Tibial artery (tissue), 4 donors: ENCODE measurements at regions of chr19 and their contacts with region 1.

Region 1: GRCh38 chr19:9004153-9004552 is 6.1 kb downstream of the MUC16 start:
- DNase-seq: no peak
- H3K4me3 ChIP-seq: no peak overlapping the region
- H3K27ac ChIP-seq: no peak overlapping the region
- H3K4me1 ChIP-seq: no peaks in the 10 kb centered on the region
- H3K27me3 ChIP-seq: no peaks in the 10 kb centered on the region
- CTCF ChIP-seq: no peak

Region 2: DNA sequence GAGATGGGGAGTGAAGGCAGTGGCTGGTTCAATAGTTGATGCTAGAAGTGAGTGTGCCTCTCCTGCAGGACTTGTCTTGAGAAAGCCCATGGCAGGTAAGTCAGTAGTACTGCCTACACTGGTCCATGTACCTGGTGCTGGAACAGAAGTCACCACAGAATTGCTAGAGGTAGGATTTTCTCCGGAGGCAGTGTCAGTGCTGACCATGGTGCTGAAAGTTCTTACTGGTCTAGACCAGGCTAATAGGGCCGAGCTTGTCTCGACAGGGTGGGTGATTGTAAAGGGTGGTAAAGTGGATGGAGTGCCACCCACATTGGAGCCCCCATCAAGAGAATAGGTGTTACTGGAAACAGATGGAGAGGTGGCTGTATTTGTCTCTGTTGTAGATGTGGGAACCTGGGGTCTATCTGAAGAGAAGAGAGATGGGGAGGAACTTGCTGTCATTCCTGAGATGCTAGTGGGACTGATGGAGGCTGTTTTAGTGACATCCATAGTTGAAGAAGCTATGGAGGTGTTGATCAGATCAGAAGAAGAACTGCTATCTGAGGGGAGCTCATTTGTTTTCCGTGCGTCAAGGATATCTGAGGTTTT is 30.6 kb before region 1 on chr19:
- intact Hi-C with region 1: no loop called
- DNase-seq: no peak
- H3K4me3 ChIP-seq: no peak overlapping the region
- H3K27ac ChIP-seq: no peak overlapping the region
- H3K4me1 ChIP-seq: no peaks in the 10 kb centered on the region
- H3K27me3 ChIP-seq: no peaks in the 10 kb centered on the region
- CTCF ChIP-seq: no peak

Region 3: GRCh38 chr19:9159891-9160290 is 155.7 kb after region 1 on chr19:
- intact Hi-C with region 1: loop called (anchors 5 kb)
- DNase-seq: no peak
- H3K4me3 ChIP-seq: no peak overlapping the region
- H3K27ac ChIP-seq: no peak overlapping the region
- H3K4me1 ChIP-seq: no peaks in the 10 kb centered on the region
- H3K27me3 ChIP-seq: no peaks in the 10 kb centered on the region
- CTCF ChIP-seq: no peak